Activated CD4-positive, alpha-beta T cell treated with anti-CD3 and anti-CD28 coated beads for 36 hours (primary cell): ENCODE measurements at regions of chr15 and their contacts with region 1.

Region 1: GRCh38 chr15:90482124-90483011 is 47.4 kb upstream of the CRTC3 start:
- DNase-seq: peak; percentile 64
- ATAC-seq: no peak
- H3K4me3 Mint-ChIP-seq: no peak overlapping the region
- H3K27ac Mint-ChIP-seq: peak overlapping the region; percentile 14
- H3K4me1 Mint-ChIP-seq: peaks cover 18% of the 10 kb centered on the region
- H3K27me3 Mint-ChIP-seq: no peaks in the 10 kb centered on the region

Region 2: DNA sequence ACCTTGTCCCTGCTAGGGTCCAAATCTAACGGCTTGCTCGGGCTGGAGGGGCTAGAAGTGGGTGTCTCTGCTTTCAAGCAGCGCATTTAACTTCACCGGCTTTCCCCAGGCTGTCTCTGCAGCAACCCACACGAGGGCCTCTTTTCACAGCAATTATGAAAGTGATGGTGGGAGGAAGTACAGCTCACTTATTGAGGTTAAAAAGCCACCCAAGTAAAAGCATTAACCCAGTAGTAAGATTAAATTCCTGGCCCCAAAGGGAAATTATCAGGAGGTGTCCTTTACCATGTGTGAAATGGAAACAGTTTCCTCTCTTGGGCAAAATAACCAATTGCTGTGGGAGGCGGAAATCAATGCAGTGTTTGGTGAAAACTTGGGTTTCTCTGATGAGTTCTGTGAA is 175.8 kb before region 1 on chr15:
- CTCF ChIA-PET with region 1: interaction called, 19 read pairs
- POLR2A ChIA-PET with region 1: no interaction called
- intact Hi-C with region 1: no loop called
- DNase-seq: peak; percentile 72
- ATAC-seq: peak; percentile 85
- H3K4me3 Mint-ChIP-seq: peak overlapping the region; percentile 32
- H3K27ac Mint-ChIP-seq: peak overlapping the region; percentile 66
- H3K4me1 Mint-ChIP-seq: peaks cover 45% of the 10 kb centered on the region
- H3K27me3 Mint-ChIP-seq: no peaks in the 10 kb centered on the region

Region 3: GRCh38 chr15:90362936-90363212 is 119.5 kb before region 1 on chr15:
- CTCF ChIA-PET with region 1: interaction called, 58 read pairs
- POLR2A ChIA-PET with region 1: no interaction called
- intact Hi-C with region 1: loop called (anchors 1 kb)
- DNase-seq: no peak
- ATAC-seq: no peak
- H3K4me3 Mint-ChIP-seq: no peak overlapping the region
- H3K27ac Mint-ChIP-seq: peak overlapping the region; percentile 5
- H3K4me1 Mint-ChIP-seq: peaks cover 25% of the 10 kb centered on the region
- H3K27me3 Mint-ChIP-seq: no peaks in the 10 kb centered on the region

Region 4: GRCh38 chr15:90463381-90463780 is 19.0 kb before region 1 on chr15:
- CTCF ChIA-PET with region 1: interaction called, 26 read pairs
- POLR2A ChIA-PET with region 1: no interaction called
- intact Hi-C with region 1: no loop called
- DNase-seq: no peak
- ATAC-seq: no peak
- H3K4me3 Mint-ChIP-seq: no peak overlapping the region
- H3K27ac Mint-ChIP-seq: no peak overlapping the region
- H3K4me1 Mint-ChIP-seq: peaks cover 21% of the 10 kb centered on the region
- H3K27me3 Mint-ChIP-seq: no peaks in the 10 kb centered on the region

Region 5: DNA sequence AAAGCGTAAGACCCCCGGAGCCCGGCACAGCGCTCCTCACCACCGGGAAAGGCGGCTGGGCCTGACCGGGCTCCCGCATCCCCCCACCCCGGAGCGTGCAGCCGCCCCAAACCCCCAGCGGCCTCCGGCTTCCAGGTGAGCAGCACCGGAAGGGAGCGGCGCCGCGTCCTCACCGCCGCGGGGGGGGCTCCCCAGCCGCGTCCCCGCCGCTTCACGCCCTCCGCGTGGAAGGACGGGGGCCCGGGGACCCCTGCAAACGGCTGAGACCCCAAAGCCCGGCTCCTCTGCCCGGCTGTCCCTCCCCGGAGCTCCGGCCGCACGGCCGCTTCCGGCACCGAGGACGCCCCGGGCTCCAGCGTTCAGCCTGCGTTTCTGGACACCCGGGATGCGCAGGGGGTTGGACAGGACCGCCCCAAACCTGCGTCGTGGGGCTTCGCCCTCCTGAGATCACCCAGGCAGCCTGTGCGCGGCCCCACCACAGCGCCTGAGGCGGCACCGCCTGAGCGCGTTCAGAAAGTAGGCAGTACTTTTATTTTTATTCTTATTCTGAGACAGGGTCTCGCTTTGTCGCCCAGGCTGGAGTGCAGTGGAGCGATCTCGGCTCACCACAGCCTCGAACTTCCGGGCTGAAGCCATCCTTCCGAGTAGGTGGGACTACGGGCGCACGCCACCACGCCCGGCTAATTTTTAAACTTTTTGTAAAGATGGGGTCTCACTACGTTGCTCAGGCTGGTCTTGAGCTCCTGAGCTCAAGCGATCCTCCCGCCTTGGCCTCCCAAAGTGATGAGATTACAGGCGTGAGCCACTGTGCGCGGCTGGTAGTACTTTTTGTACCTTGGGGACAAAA is 183.1 kb after region 1 on chr15:
- CTCF ChIA-PET with region 1: no interaction called
- POLR2A ChIA-PET with region 1: no interaction called
- intact Hi-C with region 1: no loop called
- DNase-seq: peak; percentile 70
- ATAC-seq: peak; percentile 63
- H3K4me3 Mint-ChIP-seq: peak overlapping the region; percentile 71
- H3K27ac Mint-ChIP-seq: peak overlapping the region; percentile 83
- H3K4me1 Mint-ChIP-seq: peaks cover 44% of the 10 kb centered on the region
- H3K27me3 Mint-ChIP-seq: peaks cover 22% of the 10 kb centered on the region